CD14-positive monocyte (primary cell): ENCODE measurements at regions of chr10 and their contacts with region 1.

Region 1: DNA sequence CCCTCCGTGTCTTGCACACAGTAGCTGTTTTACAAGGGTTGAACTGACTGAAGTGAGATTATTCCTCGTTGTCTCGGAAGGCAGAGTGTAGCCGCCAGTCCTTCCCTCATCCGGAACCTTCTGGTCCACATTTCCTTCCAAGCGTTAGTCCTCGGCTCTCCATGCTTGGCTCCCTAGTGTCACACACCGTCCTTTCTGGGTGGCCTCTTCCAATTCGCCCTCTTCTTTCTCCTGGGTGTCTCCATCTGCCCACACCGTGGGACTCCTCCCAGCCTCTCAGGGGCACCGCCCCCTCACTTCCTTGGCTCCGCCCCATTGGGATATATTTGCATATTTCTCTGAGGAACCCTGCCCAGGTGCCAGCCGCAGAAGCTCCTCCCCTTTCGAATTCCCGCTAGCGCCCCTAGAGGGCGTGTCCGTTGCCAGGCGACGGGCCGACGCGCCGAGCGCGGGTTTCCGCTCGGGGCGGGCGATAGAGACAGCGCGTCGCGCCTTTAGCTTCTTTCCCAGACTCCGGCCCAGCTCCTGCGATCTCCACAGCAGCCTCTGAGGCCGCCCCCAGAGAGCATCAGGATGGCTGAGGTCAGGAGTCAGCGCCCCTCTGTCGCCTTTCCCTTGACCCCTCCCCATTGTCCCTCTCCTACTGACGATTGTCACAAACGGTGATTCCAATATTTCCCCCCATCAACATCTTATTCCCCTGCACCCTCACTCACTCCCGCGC is at the start of gene CFAP58:
- DNase-seq: peak; percentile 81 to 88 (median 83)
- H3K4me3 ChIP-seq: peak within 1 kb of the TSS; percentile 18 to 72 (median 36)
- H3K4me3 Mint-ChIP-seq: no peak within 1 kb of the TSS
- H3K27ac ChIP-seq: peak within 1 kb of the TSS; percentile 31 to 52
- H3K27ac Mint-ChIP-seq: no peak within 1 kb of the TSS
- H3K4me1 ChIP-seq: peaks cover 68 to 72% of the 10 kb centered on the region in 2 donors
- H3K4me1 Mint-ChIP-seq: no peaks in the 10 kb centered on the region
- H3K27me3 ChIP-seq: no peaks in the 10 kb centered on the region
- H3K27me3 Mint-ChIP-seq: peaks cover 0 to 1% (median 0%) of the 10 kb centered on the region in 3 donors
- CTCF ChIP-seq: peak; percentile 83
- polyA plus RNA-seq, gene CFAP58: 0.16 TPM in 1 of 3 donors, not detected in the others

Region 2: DNA sequence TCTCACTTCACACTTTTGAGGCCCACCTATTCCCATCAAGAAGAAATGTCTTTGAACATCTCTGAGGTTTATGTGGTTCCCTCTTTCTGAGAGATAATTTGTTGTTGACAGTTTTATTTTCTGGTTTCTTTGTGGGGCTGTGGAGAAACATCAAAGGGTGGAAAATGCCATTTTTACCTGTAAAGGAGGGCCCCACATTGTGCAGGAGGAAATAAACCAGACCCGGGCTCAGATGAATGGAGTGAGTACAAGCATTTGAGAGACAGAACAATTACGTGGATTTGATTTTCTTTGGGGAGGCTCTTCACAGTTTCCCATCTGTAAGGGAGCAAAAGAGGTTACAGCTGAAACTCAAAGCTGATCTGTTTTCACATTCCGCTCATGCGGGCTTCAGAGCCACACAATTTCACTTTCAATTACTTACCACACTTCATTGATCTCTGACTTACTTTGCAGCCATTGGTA is 45.0 kb before region 1 on chr10:
- intact Hi-C with region 1: loop called in 1 of 2 experiments (anchors 5 kb)
- DNase-seq: no peak
- H3K4me3 ChIP-seq: no peak overlapping the region
- H3K4me3 Mint-ChIP-seq: no peak overlapping the region
- H3K27ac ChIP-seq: peak overlapping the region in 1 of 2 donors; percentile 3
- H3K27ac Mint-ChIP-seq: peak overlapping the region in 3 of 7 donors; percentile 56 to 74 (median 74)
- H3K4me1 ChIP-seq: peaks cover 15 to 24% of the 10 kb centered on the region in 2 donors
- H3K4me1 Mint-ChIP-seq: peaks cover 47% of the 10 kb centered on the region
- H3K27me3 ChIP-seq: no peaks in the 10 kb centered on the region
- H3K27me3 Mint-ChIP-seq: peaks cover 0 to 4% (median 2%) of the 10 kb centered on the region in 3 donors
- CTCF ChIP-seq: no peak